Esophagus muscularis mucosa (tissue), 4 donors: ENCODE measurements at regions of chr17 and their contacts with region 1.

Region 1: DNA sequence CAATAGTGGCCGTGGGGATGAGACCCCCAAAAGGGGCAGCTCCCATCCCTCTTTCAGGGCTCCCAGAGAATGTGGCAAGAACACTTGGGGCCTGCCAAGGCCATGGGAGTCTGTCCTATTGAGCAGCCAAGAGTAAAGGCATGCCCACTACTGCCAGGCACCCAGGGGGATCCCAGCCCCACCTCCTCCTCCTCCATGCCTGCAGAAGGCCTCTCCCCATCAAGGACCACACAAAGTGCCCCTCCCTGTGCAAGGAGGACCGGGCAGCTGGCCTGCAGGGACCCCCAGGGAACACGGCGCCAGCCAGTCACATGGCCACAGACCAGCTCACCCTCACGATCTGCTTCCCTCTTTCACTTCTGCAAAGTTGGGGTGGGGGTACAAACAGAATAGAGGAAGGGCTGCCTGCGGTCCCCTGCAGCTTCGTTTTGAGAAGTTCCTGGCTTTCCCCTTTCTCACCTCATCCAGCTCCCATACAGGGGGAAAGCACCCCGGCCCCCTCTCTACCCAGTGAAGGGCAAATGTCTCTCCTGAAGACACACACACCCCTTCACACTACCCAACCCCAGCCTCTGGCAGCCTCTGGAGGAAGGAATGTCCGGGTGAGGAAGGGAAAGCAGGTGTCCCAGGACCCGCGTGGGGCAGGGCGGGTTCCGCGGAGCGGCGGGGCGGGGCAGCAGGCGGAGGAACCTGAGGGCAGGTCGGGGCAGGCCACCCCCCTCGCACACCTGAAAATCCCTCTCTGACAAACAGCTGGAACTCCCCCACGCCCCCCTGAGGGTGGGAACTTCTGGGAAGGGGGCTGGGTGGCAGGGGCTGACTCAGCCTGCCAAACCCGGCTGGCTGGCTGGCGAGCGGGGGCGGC is 2.0 kb downstream of the PPP1R9B start:
- DNase-seq: no peak
- H3K4me3 ChIP-seq: peak overlapping the region; percentile 76 to 91 (median 78)
- H3K27ac ChIP-seq: peak overlapping the region; percentile 87 to 95 (median 94)
- H3K4me1 ChIP-seq: peaks cover 51 to 94% (median 85%) of the 10 kb centered on the region in 4 donors
- H3K27me3 ChIP-seq: no peaks in the 10 kb centered on the region
- CTCF ChIP-seq: peak; percentile 12 to 27 (median 22)
- EP300 ChIP-seq: no peak
- POLR2A ChIP-seq: no peak

Region 2: DNA sequence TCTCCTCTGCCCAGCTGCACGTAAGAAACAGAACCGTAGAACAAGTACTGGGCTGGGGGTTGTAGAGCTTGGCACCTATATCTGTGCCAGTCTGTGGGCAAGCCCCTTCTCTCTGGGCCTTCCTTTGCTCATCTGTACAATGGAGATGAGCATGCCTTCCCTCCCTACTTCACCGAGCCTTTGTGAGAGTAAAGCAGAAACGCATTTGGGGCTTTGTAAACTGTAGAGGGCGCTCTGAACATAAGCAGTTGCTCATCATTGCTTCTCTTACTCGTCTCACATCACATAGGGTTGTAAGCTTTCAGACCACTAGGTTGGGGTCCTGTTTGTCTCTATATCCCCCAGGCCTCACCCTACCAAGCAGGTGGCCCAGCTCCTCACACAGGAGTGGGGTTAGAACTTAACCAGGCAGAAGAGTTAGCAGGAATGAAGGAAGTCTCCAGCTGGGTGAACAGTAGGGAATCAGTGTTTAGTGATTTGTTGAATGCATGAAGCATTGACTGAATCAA is 33.6 kb before region 1 on chr17:
- intact Hi-C with region 1: loop called (anchors 5 kb)
- DNase-seq: no peak
- H3K4me3 ChIP-seq: no peak overlapping the region
- H3K27ac ChIP-seq: no peak overlapping the region
- H3K4me1 ChIP-seq: peaks cover 39 to 62% (median 51%) of the 10 kb centered on the region in 4 donors
- H3K27me3 ChIP-seq: peaks cover 0 to 5% (median 0%) of the 10 kb centered on the region in 4 donors
- CTCF ChIP-seq: peak; percentile 35 to 61 (median 48)
- EP300 ChIP-seq: no peak
- POLR2A ChIP-seq: no peak